Heart right ventricle (tissue), 16 donors: ENCODE measurements at regions of chr2 and their contacts with region 1.

Region 1: GRCh38 chr2:228657807-228658402 is 476.4 kb upstream of the SPHKAP start:
- DNase-seq: no peak
- ATAC-seq: peak in 4 of 8 donors; percentile 58 to 68 (median 64)
- H3K4me3 ChIP-seq: no peak overlapping the region
- H3K27ac ChIP-seq: no peak overlapping the region
- H3K4me1 ChIP-seq: peaks cover 0 to 4% (median 0%) of the 10 kb centered on the region in 9 donors
- H3K27me3 ChIP-seq: no peaks in the 10 kb centered on the region
- CTCF ChIP-seq: peak; percentile 11 to 62 (median 50)

Region 2: DNA sequence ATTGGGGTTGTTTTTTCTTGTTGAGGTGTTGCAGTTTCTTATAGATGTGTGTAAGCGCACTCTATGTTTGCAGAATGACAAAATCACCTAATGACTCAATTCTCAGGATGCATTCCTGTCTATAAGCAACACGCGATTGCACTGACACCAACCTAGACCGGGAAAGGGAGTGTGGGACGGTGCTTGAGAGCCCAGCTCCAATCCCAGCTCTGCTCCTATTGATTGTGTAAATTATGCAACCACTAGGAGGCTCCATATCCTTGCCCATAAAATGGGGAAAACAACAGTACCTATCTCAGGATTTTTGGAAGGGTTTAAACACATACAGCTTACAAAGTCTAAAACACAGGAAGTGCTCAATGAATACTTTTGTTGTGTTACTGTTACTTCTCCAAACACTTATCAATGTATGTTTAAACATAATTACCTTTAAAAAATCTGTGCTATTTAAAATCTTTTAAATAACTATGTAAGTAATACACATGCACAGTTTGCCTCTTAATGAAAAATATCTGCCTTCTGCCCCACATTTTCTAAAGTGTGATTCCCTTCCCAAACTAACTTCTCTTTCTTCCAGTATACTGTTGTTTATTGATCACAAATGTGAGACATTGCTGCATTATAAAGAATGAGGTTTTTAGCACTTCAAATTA is 608.9 kb before region 1 on chr2:
- intact Hi-C with region 1: loop called in 8 of 10 experiments (anchors 2 to 5 kb)
- DNase-seq: peak in 1 of 2 donors; percentile 7
- ATAC-seq: peak; percentile 63 to 89 (median 82)
- H3K4me3 ChIP-seq: no peak overlapping the region
- H3K27ac ChIP-seq: peak overlapping the region in 1 of 10 donors; percentile 12
- H3K4me1 ChIP-seq: peaks cover 0 to 6% (median 0%) of the 10 kb centered on the region in 9 donors
- H3K27me3 ChIP-seq: no peaks in the 10 kb centered on the region
- CTCF ChIP-seq: peak; percentile 21 to 68 (median 47)

Region 3: GRCh38 chr2:228318218-228318617 is 339.7 kb before region 1 on chr2:
- intact Hi-C with region 1: loop called in 6 of 10 experiments (anchors 5 to 10 kb)
- DNase-seq: peak; percentile 14 to 38
- ATAC-seq: peak in 7 of 8 donors; percentile 61 to 82 (median 77)
- H3K4me3 ChIP-seq: no peak overlapping the region
- H3K27ac ChIP-seq: no peak overlapping the region
- H3K4me1 ChIP-seq: peaks cover 0 to 19% (median 13%) of the 10 kb centered on the region in 9 donors
- H3K27me3 ChIP-seq: no peaks in the 10 kb centered on the region
- CTCF ChIP-seq: peak in 7 of 9 donors; percentile 42 to 60 (median 53)

Region 4: GRCh38 chr2:228329282-228329681 is 328.6 kb before region 1 on chr2:
- intact Hi-C with region 1: loop called in 6 of 10 experiments (anchors 5 to 10 kb)
- DNase-seq: peak; percentile 28 to 43
- ATAC-seq: peak; percentile 61 to 98 (median 91)
- H3K4me3 ChIP-seq: no peak overlapping the region
- H3K27ac ChIP-seq: peak overlapping the region in 8 of 10 donors; percentile 20 to 73 (median 62)
- H3K4me1 ChIP-seq: peaks cover 0 to 10% (median 0%) of the 10 kb centered on the region in 9 donors
- H3K27me3 ChIP-seq: no peaks in the 10 kb centered on the region
- CTCF ChIP-seq: no peak

Region 5: GRCh38 chr2:228561816-228562215 is 96.1 kb before region 1 on chr2:
- intact Hi-C with region 1: no loop called
- DNase-seq: no peak
- ATAC-seq: no peak
- H3K4me3 ChIP-seq: no peak overlapping the region
- H3K27ac ChIP-seq: no peak overlapping the region
- H3K4me1 ChIP-seq: no peaks in the 10 kb centered on the region
- H3K27me3 ChIP-seq: no peaks in the 10 kb centered on the region
- CTCF ChIP-seq: no peak

Region 6: DNA sequence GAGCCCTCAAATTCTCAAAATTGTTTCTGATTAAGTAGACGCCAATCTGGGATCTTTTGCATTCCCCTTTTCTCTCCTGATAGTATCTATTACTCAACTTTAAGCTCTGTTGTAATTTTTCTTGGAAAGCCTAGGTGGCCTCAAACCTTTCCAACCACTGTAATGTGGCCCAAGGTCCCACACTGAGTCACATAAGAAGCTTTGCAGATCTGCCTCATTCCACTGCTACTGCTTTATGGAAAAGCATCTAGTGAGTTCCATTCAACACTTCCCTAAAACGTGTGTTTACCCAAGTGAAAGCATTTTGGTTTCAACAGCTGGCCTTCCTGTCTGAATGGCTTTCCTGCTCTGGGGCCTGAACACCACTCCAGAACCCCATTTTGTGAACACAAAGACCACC is 17.2 kb after region 1 on chr2:
- intact Hi-C with region 1: no loop called
- DNase-seq: no peak
- ATAC-seq: peak in 6 of 8 donors; percentile 59 to 87 (median 80)
- H3K4me3 ChIP-seq: no peak overlapping the region
- H3K27ac ChIP-seq: no peak overlapping the region
- H3K4me1 ChIP-seq: peaks cover 0 to 10% (median 0%) of the 10 kb centered on the region in 9 donors
- H3K27me3 ChIP-seq: no peaks in the 10 kb centered on the region
- CTCF ChIP-seq: no peak